ENCODE measurements at regions of chr16 and their contacts with region 1.

Region 1: GRCh38 chr16:15592324-15592723 is 50.6 kb downstream of the MARF1 start:
- DNase-seq: peak; percentile 27
- ATAC-seq: no peak
- H3K4me3 Mint-ChIP-seq: no peak overlapping the region
- H3K27ac Mint-ChIP-seq: no peak overlapping the region
- H3K4me1 Mint-ChIP-seq: peaks cover 42% of the 10 kb centered on the region
- H3K27me3 Mint-ChIP-seq: no peaks in the 10 kb centered on the region

Region 2: DNA sequence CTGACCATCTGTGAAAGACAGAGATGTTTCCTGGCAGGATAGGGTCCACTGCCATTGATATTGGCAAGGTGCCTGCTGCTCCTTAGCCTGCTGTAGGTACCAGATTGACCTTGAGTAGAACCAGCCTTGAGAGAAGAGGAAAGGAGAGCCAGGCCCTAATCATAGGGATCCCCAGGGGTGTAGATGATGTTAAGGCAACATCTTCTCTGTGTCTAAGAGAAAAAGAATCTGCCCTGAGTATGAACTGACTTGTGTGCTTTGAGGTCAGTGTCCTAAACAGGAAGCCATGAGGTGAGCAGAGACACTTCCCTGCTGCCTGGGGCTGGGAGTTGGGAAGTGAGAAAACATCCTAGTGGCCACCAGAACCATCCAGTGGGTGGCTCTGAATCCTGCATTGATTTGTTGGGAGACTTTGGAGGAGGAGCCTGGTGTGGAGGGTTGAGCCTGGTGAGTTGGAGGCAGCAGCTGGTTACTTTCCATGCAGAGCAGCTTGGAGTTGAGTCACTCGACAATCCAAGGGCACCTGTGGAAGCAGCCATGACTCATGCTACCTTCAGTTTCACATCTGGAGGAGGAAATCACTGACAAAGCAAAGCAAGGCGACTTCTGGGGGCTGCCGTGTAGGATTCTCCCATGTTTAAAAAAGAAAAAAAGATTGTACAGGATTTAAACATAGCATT is 110.1 kb before region 1 on chr16:
- CTCF ChIA-PET with region 1: no interaction called
- POLR2A ChIA-PET with region 1: interaction called, 7 read pairs
- intact Hi-C with region 1: loop called in 1 of 2 experiments (anchors 1 kb)
- DNase-seq: peak; percentile 75
- ATAC-seq: peak; percentile 96
- H3K4me3 Mint-ChIP-seq: no peak overlapping the region
- H3K27ac Mint-ChIP-seq: peak overlapping the region; percentile 61
- H3K4me1 Mint-ChIP-seq: peaks cover 24% of the 10 kb centered on the region
- H3K27me3 Mint-ChIP-seq: peaks cover 2% of the 10 kb centered on the region

Region 3: GRCh38 chr16:15509593-15510535 is 82.5 kb before region 1 on chr16:
- CTCF ChIA-PET with region 1: no interaction called
- POLR2A ChIA-PET with region 1: no interaction called
- intact Hi-C with region 1: loop called in 1 of 2 experiments (anchors 1 kb)
- DNase-seq: peak; percentile 49
- ATAC-seq: peak; percentile 49
- H3K4me3 Mint-ChIP-seq: no peak overlapping the region
- H3K27ac Mint-ChIP-seq: peak overlapping the region; percentile 76
- H3K4me1 Mint-ChIP-seq: peaks cover 23% of the 10 kb centered on the region
- H3K27me3 Mint-ChIP-seq: no peaks in the 10 kb centered on the region

Region 4: GRCh38 chr16:15643048-15643945 is 51.0 kb after region 1 on chr16 and contains the start of gene MARF1:
- CTCF ChIA-PET with region 1: no interaction called
- POLR2A ChIA-PET with region 1: interaction called, 9 read pairs
- intact Hi-C with region 1: loop called (anchors 1 kb)
- DNase-seq: peak; percentile 100
- ATAC-seq: peak; percentile 70
- H3K4me3 Mint-ChIP-seq: peak within 1 kb of the TSS; percentile 84
- H3K27ac Mint-ChIP-seq: peak within 1 kb of the TSS; percentile 98
- H3K4me1 Mint-ChIP-seq: peaks cover 52% of the 10 kb centered on the region
- H3K27me3 Mint-ChIP-seq: no peaks in the 10 kb centered on the region
- total RNA-seq, gene MARF1: 50.2 to 72.5 TPM

Region 5: DNA sequence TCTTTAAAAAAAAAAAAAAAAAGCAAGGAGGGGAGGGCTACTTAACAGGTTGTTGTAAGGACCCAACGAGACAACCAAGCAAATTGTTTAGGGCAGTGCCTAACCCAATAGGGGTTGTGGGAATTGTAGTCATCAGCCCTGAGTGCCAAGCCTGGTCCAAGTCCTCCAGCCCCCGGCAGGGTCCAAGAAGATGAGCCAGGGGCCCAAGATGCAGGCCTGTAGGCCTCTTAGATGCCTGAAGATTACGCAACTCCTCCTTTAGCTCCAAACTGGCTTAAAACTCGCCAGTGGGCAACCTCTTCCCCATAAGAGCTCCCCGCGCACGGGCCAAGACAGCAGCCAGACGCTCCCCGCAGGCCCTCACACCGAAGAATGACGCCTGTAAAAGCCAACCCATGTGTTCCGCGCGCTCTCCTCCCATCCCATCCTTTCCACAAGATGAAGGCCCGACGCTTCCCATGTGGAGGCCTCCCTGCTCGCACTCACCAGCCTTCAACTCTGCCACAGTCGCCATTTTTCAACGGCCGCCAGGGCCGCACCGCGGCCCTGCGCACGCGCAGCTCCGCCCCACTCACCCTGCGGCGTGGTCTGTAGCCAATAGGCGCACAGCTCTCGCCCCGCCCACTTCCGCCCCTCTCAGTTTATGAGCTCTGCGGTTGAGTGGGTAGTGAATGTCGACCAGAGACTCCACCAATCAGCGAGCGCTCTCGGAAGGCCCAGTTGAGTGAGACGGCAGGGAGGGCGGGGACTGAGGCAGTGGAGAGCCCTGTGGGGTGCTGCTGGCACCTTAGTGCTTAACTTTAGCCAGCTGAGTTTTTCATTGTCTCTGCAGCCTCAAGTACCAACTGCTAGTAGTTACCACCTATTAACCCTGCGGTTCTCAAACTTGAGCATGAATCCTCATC is 296.0 kb after region 1 on chr16 and contains the start of gene CEP20:
- CTCF ChIA-PET with region 1: no interaction called
- POLR2A ChIA-PET with region 1: no interaction called
- intact Hi-C with region 1: loop called in 1 of 2 experiments (anchors 1 kb)
- DNase-seq: peak; percentile 100
- ATAC-seq: peak; percentile 99
- H3K4me3 Mint-ChIP-seq: peak within 1 kb of the TSS; percentile 92
- H3K27ac Mint-ChIP-seq: peak within 1 kb of the TSS; percentile 99
- H3K4me1 Mint-ChIP-seq: peaks cover 28% of the 10 kb centered on the region
- H3K27me3 Mint-ChIP-seq: no peaks in the 10 kb centered on the region
- total RNA-seq, gene CEP20: 39.3 to 51.0 TPM

Region 6: GRCh38 chr16:17070882-17071592 is 1478.7 kb after region 1 on chr16:
- CTCF ChIA-PET with region 1: no interaction called
- POLR2A ChIA-PET with region 1: no interaction called
- intact Hi-C with region 1: loop called in 1 of 2 experiments (anchors 5 kb)
- DNase-seq: peak; percentile 88
- ATAC-seq: peak; percentile 85
- H3K4me3 Mint-ChIP-seq: peak overlapping the region; percentile 68
- H3K27ac Mint-ChIP-seq: peak overlapping the region; percentile 72
- H3K4me1 Mint-ChIP-seq: peaks cover 19% of the 10 kb centered on the region
- H3K27me3 Mint-ChIP-seq: no peaks in the 10 kb centered on the region